CD14-positive monocyte (primary cell): ENCODE measurements at regions of chr4 and their contacts with region 1.

Region 1: DNA sequence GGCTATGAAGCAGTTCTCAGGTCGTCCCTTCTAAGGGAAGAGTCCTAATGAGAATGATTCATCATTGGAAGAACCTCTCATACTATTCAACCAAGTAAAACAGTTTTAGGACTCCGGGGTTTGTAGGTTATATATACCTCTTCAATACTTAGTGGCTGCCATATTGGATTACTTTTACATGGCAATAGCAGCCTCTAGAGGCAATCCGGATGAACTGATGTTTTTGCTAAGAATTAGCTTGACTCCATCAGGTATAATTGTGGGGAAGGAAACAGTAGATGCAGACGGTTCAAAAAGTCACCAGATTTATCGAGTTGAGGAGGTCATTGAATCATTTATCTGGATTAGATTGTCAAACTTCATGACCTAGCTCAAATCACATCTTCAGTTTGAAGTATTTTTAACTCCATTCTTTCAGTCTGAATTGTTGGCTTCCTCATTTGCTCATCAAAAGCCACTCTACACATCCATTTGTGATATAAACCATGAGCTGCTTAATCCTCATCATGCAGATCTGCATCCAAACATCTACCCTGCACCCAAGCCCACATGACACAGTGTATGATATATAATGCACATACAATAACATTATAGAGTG is 28.4 kb downstream of the GUCY1B1 start:
- DNase-seq: peak; percentile 31 to 72 (median 56)
- H3K4me3 ChIP-seq: no peak overlapping the region
- H3K4me3 Mint-ChIP-seq: no peak overlapping the region
- H3K27ac ChIP-seq: no peak overlapping the region
- H3K27ac Mint-ChIP-seq: no peak overlapping the region
- H3K4me1 ChIP-seq: no peaks in the 10 kb centered on the region
- H3K4me1 Mint-ChIP-seq: peaks cover 2% of the 10 kb centered on the region
- H3K27me3 ChIP-seq: no peaks in the 10 kb centered on the region
- H3K27me3 Mint-ChIP-seq: no peaks in the 10 kb centered on the region
- CTCF ChIP-seq: peak; percentile 88

Region 2: DNA sequence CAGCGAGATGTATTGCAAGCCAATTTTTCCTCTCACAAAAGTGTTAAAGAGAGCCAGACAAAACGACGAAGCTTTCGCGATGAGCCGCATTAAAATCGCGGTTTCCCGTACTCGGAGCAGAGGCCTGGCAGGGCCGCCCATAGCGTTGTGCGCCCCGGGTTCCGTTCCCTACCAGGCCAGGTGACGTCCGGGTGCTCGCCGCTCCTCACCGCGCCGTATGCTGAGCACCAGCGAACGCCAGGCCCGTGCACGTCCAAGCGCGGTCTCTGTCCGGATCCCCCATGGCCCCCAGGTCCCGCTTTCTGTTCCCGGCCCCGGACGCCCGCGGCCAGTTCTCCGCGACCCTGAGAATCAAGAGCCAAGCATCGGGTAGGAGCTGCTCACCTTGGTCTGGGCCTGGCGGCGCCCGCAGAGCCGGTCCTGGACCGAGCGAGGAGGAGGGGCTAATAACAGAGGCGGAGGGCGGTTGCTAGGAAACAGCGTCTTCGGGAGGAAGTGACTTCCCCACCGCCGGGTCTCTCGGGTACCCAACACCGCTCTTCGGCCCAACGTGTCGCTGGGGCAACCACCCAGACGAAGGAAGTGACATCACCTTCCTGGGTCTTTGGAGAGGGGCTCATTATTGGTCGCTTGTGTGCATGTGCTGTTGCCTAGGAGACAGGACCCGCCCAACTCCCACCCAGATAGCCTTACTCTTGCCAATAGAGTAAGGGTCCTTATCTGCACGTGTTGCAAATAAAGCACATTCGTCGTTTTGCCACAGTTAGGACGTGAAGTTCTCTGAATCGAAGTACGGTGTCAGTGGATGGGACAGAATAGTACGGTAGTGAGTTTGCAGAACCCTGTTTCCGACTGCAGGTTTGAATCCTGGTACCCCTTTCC is 410.6 kb before region 1 on chr4 and contains the start of gene MAP9:
- intact Hi-C with region 1: loop called in 1 of 2 experiments (anchors 10 kb)
- DNase-seq: peak; percentile 36 to 76 (median 37)
- H3K4me3 ChIP-seq: peak within 1 kb of the TSS; percentile 19 to 71 (median 39)
- H3K4me3 Mint-ChIP-seq: peak within 1 kb of the TSS; percentile 73 to 90
- H3K27ac ChIP-seq: no peak within 1 kb of the TSS
- H3K27ac Mint-ChIP-seq: no peak within 1 kb of the TSS
- H3K4me1 ChIP-seq: peaks cover 11 to 13% of the 10 kb centered on the region in 2 donors
- H3K4me1 Mint-ChIP-seq: peaks cover 13% of the 10 kb centered on the region
- H3K27me3 ChIP-seq: peaks cover 18 to 27% of the 10 kb centered on the region in 2 donors
- H3K27me3 Mint-ChIP-seq: peaks cover 34 to 35% (median 35%) of the 10 kb centered on the region in 3 donors
- CTCF ChIP-seq: no peak
- polyA plus RNA-seq, gene MAP9: 0.01 TPM in 1 of 3 donors, not detected in the others

Region 3: DNA sequence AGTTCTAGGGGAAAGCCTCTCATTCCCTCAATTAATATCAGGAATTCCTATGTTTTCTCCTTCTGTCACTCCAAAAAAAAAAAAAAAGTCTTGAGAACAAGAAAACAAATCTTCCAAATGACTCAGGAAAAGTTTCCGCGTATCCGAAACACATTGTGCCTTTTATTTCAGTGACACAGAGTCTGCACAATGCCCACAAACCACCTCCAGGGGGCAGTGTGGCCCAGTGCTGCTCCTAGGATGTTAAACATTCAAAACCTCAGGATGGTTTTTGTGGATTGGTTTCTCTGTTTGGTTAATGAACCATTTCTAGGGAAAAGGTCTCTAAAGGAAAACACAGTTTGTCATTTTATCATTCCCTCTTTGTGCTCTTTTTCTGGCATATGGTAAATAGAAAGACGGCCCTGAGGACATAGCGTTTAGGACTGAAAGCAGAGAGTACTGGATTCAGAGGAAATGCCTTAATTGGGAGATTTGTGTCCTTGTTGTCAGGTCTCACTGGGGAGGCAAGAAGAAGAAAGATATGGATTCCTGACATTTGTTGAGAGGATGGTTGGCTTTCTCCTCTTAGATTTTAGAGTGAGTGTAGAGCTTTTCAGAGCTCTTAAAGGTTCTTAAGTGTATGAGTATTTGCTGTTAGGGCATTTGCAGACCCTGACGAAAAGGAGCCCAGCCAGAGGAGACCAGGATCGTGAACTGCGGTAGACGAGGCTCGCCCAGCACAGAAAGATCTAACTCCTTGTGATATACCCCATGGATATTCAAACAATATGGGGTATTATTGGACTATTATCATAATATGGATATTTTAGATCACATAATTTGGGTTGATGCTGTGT is 344.7 kb before region 1 on chr4:
- intact Hi-C with region 1: loop called (anchors 2 kb)
- DNase-seq: peak; percentile 34 to 60 (median 51)
- H3K4me3 ChIP-seq: no peak overlapping the region
- H3K4me3 Mint-ChIP-seq: peak overlapping the region in 1 of 2 donors; percentile 67
- H3K27ac ChIP-seq: no peak overlapping the region
- H3K27ac Mint-ChIP-seq: no peak overlapping the region
- H3K4me1 ChIP-seq: no peaks in the 10 kb centered on the region
- H3K4me1 Mint-ChIP-seq: peaks cover 6% of the 10 kb centered on the region
- H3K27me3 ChIP-seq: no peaks in the 10 kb centered on the region
- H3K27me3 Mint-ChIP-seq: peaks cover 2 to 7% (median 5%) of the 10 kb centered on the region in 3 donors
- CTCF ChIP-seq: peak; percentile 88